CD4-positive, alpha-beta T cell (primary cell): ENCODE measurements at regions of chr15 and their contacts with region 1.

Region 1: DNA sequence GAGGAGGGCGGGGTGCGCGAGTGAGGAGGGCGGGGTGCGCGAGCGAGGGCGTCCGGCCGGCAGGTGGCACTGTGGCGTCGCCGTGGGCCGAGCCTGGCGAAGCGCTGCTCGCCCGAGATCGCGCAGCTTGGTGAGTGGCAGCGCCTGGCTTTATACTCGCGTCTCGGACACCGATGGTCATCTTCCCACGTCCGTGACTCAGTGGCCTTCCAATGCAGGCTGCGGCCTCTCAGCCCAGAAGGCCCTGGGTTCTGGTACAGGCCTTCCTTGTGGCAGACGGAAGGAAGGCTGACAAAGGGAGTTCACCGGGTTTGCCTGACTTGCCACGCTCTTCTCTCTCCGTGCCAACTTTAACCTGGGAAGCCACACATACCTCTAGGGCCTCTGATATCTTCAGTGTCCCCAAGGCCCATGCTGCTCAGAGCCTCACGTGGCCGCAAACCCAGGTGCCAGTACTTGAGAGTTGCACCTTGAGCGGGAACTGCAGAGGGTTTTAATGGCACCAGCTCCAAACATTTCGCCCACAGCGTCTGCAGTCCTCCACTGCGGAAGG is 195.3 kb upstream of the LYSMD4 start:
- DNase-seq: peak; percentile 76 to 95 (median 88)
- ATAC-seq: peak; percentile 85
- H3K4me3 ChIP-seq: peak overlapping the region; percentile 75
- H3K4me3 Mint-ChIP-seq: peak overlapping the region; percentile 93
- H3K27ac ChIP-seq: peak overlapping the region; percentile 56 to 58
- H3K27ac Mint-ChIP-seq: peak overlapping the region; percentile 89
- H3K4me1 ChIP-seq: peaks cover 21% of the 10 kb centered on the region
- H3K4me1 Mint-ChIP-seq: peaks cover 24% of the 10 kb centered on the region
- H3K27me3 ChIP-seq: no peaks in the 10 kb centered on the region
- H3K27me3 Mint-ChIP-seq: peaks cover 5% of the 10 kb centered on the region
- CTCF ChIP-seq: peak; percentile 65

Region 2: DNA sequence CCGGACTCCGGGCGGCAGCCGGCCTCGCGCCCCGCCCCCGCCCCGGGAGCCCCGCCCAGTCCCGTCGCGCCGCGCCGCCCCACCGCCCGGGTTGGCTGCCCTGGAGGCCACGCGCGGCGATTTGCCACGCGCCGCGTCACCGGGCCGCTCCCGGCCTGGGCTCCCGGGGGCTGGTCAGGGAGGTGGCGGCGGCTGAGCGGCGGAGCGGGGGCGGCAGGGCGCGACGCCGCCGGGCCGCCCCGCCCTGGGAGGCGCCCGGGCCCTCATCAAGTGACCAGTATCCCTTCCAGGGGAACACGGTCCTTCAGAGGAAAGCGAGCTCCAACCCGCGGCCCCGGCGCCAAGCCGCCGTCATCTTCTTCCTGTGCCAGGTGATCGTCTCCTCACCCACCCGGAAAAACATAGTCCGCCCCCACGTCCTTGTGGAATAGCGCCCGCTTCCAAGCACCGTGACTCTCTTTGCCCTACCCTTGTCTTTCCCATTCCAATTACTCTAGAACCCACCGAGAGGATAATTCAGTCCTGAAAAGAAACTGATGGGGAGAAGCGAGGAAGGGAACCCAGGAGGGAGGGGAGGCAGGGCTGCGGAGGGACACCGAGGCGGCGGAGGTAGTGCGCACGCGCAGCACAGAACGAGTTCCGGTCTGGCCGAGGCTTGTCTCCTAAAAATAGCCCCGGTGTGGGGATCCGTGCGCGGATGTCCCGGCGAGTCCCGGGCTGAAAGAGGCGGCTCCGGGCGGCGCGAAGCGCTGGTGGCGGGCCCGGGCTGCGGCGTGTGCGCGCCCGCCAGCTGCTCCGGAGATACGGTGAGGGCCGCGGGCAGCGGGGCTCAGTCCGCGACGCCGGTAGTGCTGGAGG is 363.0 kb before region 1 on chr15 and contains the start of gene MEF2A:
- CTCF ChIA-PET with region 1: no interaction called
- POLR2A ChIA-PET with region 1: no interaction called
- intact Hi-C with region 1: loop called in 1 of 2 experiments (anchors 10 kb)
- DNase-seq: peak; percentile 84 to 96 (median 88)
- ATAC-seq: peak; percentile 69
- H3K4me3 ChIP-seq: peak within 1 kb of the TSS; percentile 97
- H3K4me3 Mint-ChIP-seq: peak within 1 kb of the TSS; percentile 97
- H3K27ac ChIP-seq: peak within 1 kb of the TSS; percentile 86 to 94
- H3K27ac Mint-ChIP-seq: peak within 1 kb of the TSS; percentile 96
- H3K4me1 ChIP-seq: peaks cover 22% of the 10 kb centered on the region
- H3K4me1 Mint-ChIP-seq: peaks cover 57% of the 10 kb centered on the region
- H3K27me3 ChIP-seq: no peaks in the 10 kb centered on the region
- H3K27me3 Mint-ChIP-seq: no peaks in the 10 kb centered on the region
- CTCF ChIP-seq: no peak
- total RNA-seq, gene MEF2A: 23.2 to 24.9 TPM

Region 3: GRCh38 chr15:99777136-99777535 is 151.4 kb before region 1 on chr15:
- CTCF ChIA-PET with region 1: no interaction called
- POLR2A ChIA-PET with region 1: no interaction called
- intact Hi-C with region 1: no loop called
- DNase-seq: no peak
- ATAC-seq: no peak
- H3K4me3 ChIP-seq: no peak overlapping the region
- H3K4me3 Mint-ChIP-seq: no peak overlapping the region
- H3K27ac ChIP-seq: no peak overlapping the region
- H3K27ac Mint-ChIP-seq: no peak overlapping the region
- H3K4me1 ChIP-seq: no peaks in the 10 kb centered on the region
- H3K4me1 Mint-ChIP-seq: no peaks in the 10 kb centered on the region
- H3K27me3 ChIP-seq: no peaks in the 10 kb centered on the region
- H3K27me3 Mint-ChIP-seq: no peaks in the 10 kb centered on the region
- CTCF ChIP-seq: no peak

Region 4: GRCh38 chr15:100341662-100342560 is 413.4 kb after region 1 on chr15 and contains the start of gene ADAMTS17:
- CTCF ChIA-PET with region 1: interaction called, 24 read pairs
- POLR2A ChIA-PET with region 1: interaction called, 36 read pairs
- intact Hi-C with region 1: loop called (anchors 2 kb)
- DNase-seq: peak; percentile 89 to 98 (median 94)
- ATAC-seq: peak; percentile 96
- H3K4me3 ChIP-seq: peak within 1 kb of the TSS; percentile 58
- H3K4me3 Mint-ChIP-seq: peak within 1 kb of the TSS; percentile 88
- H3K27ac ChIP-seq: no peak within 1 kb of the TSS
- H3K27ac Mint-ChIP-seq: no peak within 1 kb of the TSS
- H3K4me1 ChIP-seq: peaks cover 27% of the 10 kb centered on the region
- H3K4me1 Mint-ChIP-seq: peaks cover 14% of the 10 kb centered on the region
- H3K27me3 ChIP-seq: no peaks in the 10 kb centered on the region
- H3K27me3 Mint-ChIP-seq: no peaks in the 10 kb centered on the region
- CTCF ChIP-seq: peak; percentile 92
- total RNA-seq, gene ADAMTS17: 9.9 to 13.2 TPM

Region 5: DNA sequence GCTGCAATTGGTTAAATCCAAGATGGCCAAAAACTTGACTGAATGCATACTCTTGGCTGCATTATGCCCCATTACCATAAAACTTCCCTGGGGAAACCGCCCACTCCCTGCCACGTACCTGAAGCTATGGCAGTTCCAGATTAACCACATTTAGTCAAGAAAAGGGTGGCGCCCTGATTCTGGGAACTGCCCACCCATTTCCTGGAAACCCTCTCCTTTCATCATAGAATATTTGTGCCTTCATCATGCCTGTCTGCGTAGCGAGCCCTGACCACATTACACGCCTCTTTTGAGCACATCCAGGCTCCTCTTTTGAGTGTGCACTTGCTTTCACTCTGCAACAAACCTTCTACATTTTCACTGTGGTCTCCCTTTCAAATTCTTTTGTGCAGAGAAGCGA is 668.3 kb after region 1 on chr15:
- CTCF ChIA-PET with region 1: interaction called, 6 read pairs
- POLR2A ChIA-PET with region 1: interaction called, 6 read pairs
- intact Hi-C with region 1: loop called in 1 of 2 experiments (anchors 10 kb)
- DNase-seq: peak; percentile 58 to 96 (median 87)
- ATAC-seq: peak; percentile 84
- H3K4me3 ChIP-seq: peak overlapping the region; percentile 42
- H3K4me3 Mint-ChIP-seq: peak overlapping the region; percentile 71
- H3K27ac ChIP-seq: peak overlapping the region; percentile 75 to 81
- H3K27ac Mint-ChIP-seq: no peak overlapping the region
- H3K4me1 ChIP-seq: peaks cover 69% of the 10 kb centered on the region
- H3K4me1 Mint-ChIP-seq: peaks cover 77% of the 10 kb centered on the region
- H3K27me3 ChIP-seq: no peaks in the 10 kb centered on the region
- H3K27me3 Mint-ChIP-seq: no peaks in the 10 kb centered on the region
- CTCF ChIP-seq: no peak

Region 6: DNA sequence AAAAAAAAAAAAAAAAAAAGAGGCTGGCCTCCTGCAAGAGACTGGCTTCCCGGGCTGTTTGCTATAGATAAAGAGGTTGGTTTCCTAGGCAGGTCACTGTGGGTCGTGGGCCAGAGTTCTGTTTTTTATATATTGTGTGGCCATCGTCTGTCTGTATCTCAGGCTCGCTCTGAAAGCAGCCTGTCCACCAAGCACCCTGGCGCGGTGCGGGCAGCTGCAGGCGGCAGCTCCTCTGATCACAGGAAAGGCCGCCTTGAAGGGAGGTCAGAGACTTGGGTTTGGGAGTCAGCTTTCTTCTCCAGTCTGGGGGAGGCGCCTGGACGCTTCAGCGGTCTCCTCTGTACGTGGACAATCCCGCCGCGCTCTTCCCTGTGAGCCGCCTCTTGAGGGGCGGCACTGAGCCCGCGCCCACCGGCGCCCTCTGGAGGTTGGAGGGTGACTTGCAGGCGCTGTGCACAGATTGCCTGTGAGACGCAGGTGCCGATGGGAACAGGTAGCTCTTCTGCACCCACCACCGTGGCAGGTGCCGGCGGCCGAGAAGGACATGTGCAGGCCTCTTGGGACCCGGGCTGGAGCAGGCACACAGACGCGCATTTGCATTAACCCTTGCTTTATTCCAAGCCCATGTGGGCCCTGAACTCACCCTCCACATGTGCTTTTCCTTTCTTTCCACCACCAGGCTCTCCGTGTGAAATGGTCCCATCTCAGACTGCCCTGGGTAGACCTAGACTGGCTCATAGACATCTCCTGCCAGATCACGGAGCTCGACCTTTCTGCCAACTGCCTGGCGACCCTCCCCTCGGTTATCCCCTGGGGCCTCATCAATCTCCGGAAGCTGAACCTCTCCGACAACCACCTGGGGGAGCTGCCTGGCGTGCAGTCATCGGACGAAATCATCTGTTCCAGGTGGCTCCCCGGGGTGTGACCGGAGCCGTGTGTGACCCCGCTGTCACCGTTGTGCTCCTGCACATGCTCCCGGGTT is 1079.9 kb after region 1 on chr15:
- CTCF ChIA-PET with region 1: no interaction called
- POLR2A ChIA-PET with region 1: no interaction called
- intact Hi-C with region 1: loop called (anchors 2 kb)
- DNase-seq: peak; percentile 76 to 93 (median 84)
- ATAC-seq: peak; percentile 97
- H3K4me3 ChIP-seq: peak overlapping the region; percentile 69
- H3K4me3 Mint-ChIP-seq: peak overlapping the region; percentile 94
- H3K27ac ChIP-seq: no peak overlapping the region
- H3K27ac Mint-ChIP-seq: peak overlapping the region; percentile 65
- H3K4me1 ChIP-seq: peaks cover 22% of the 10 kb centered on the region
- H3K4me1 Mint-ChIP-seq: peaks cover 24% of the 10 kb centered on the region
- H3K27me3 ChIP-seq: no peaks in the 10 kb centered on the region
- H3K27me3 Mint-ChIP-seq: peaks cover 6% of the 10 kb centered on the region
- CTCF ChIP-seq: peak; percentile 99

Region 7: DNA sequence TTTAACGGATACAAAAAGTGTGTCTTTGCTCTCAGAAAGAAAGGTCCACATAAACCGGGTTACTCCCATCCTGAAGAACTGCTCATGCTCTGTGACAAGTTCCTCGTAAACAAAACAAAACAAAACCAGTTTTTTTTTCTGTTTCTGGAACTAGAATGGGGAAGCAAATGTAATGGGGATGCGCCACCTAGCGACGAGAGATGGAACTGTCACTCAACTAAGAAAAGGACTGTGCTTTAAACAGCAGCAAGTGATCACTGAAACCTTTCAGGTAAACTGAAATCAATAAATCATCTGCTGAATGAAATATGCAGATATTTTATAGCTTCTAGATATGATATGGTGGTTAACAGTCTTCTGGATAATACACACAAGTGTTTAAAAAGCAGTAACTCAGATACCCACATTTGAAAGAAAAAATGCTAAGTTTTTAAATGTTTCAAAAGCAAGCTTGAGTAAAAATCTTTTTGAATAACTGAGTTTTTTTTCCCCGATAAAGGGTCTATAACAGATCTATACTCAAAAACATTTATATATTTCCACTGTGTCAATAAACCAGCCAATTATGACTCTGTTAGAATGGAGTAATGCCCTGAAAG is 1712.8 kb after region 1 on chr15:
- CTCF ChIA-PET with region 1: no interaction called
- POLR2A ChIA-PET with region 1: no interaction called
- intact Hi-C with region 1: loop called in 1 of 2 experiments (anchors 10 kb)
- DNase-seq: peak; percentile 62 to 90 (median 72)
- ATAC-seq: peak; percentile 66
- H3K4me3 ChIP-seq: no peak overlapping the region
- H3K4me3 Mint-ChIP-seq: no peak overlapping the region
- H3K27ac ChIP-seq: peak overlapping the region; percentile 43 to 74
- H3K27ac Mint-ChIP-seq: peak overlapping the region; percentile 71
- H3K4me1 ChIP-seq: peaks cover 18% of the 10 kb centered on the region
- H3K4me1 Mint-ChIP-seq: peaks cover 42% of the 10 kb centered on the region
- H3K27me3 ChIP-seq: no peaks in the 10 kb centered on the region
- H3K27me3 Mint-ChIP-seq: no peaks in the 10 kb centered on the region
- CTCF ChIP-seq: peak; percentile 98